ENCODE measurements at regions of chr3 and their contacts with region 1.

Region 1: GRCh38 chr3:106345353-106346027 is 476.7 kb upstream of the CBLB start:
- DNase-seq: peak; percentile 58 to 68
- ATAC-seq: peak; percentile 84 to 91
- H3K4me3 ChIP-seq: peak overlapping the region in 1 of 4 donors; percentile 10
- H3K27ac ChIP-seq: peak overlapping the region; percentile 74 to 83 (median 78)
- H3K4me1 ChIP-seq: peaks cover 64 to 68% of the 10 kb centered on the region in 2 donors
- H3K27me3 ChIP-seq: no peaks in the 10 kb centered on the region
- CTCF ChIP-seq: no peak
- POLR2A ChIP-seq: no peak

Region 2: DNA sequence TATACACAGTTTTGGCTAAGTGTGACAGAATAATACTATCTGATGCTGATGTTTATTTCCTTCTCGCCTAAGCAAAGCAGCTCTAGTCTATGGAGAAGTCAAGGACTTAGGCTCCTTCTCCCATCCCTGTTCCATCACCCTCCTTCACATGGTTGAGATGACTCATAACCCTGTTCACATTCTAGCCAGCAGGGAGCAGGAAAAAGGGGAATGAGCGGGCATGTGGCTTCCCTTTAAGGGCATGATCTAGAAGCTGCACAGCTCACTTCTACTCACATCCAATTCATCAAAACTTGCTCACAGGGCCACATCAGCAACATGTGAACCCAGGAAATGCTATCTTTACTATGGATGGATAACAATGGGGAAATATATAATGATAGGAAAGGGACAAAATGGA is 517.5 kb before region 1 on chr3:
- in situ Hi-C with region 1: no loop called
- intact Hi-C with region 1: loop called (anchors 10 kb)
- DNase-seq: peak in 1 of 2 donors; percentile 45
- ATAC-seq: peak in 1 of 2 donors; percentile 85
- H3K4me3 ChIP-seq: no peak overlapping the region
- H3K27ac ChIP-seq: peak overlapping the region in 3 of 4 donors; percentile 24 to 67 (median 58)
- H3K4me1 ChIP-seq: peaks cover 18 to 65% of the 10 kb centered on the region in 2 donors
- H3K27me3 ChIP-seq: no peaks in the 10 kb centered on the region
- CTCF ChIP-seq: peak in 2 of 5 experiments; percentile 6 to 31
- POLR2A ChIP-seq: no peak

Region 3: GRCh38 chr3:106183762-106184391 is 161.6 kb before region 1 on chr3:
- in situ Hi-C with region 1: no loop called
- intact Hi-C with region 1: loop called (anchors 10 kb)
- DNase-seq: no peak
- ATAC-seq: peak; percentile 71 to 88
- H3K4me3 ChIP-seq: no peak overlapping the region
- H3K27ac ChIP-seq: peak overlapping the region; percentile 28 to 45 (median 40)
- H3K4me1 ChIP-seq: peaks cover 4 to 13% of the 10 kb centered on the region in 2 donors
- H3K27me3 ChIP-seq: no peaks in the 10 kb centered on the region
- CTCF ChIP-seq: no peak
- POLR2A ChIP-seq: no peak

Region 4: GRCh38 chr3:106457286-106458180 is 112.0 kb after region 1 on chr3:
- in situ Hi-C with region 1: loop called in 2 of 4 experiments (anchors 10 kb)
- intact Hi-C with region 1: loop called (anchors 5 kb)
- DNase-seq: peak; percentile 84 to 91
- ATAC-seq: peak; percentile 99 to 100
- H3K4me3 ChIP-seq: no peak overlapping the region
- H3K27ac ChIP-seq: peak overlapping the region; percentile 70 to 79 (median 72)
- H3K4me1 ChIP-seq: peaks cover 27% of the 10 kb centered on the region in 2 donors
- H3K27me3 ChIP-seq: no peaks in the 10 kb centered on the region
- CTCF ChIP-seq: no peak
- POLR2A ChIP-seq: no peak